ENCODE measurements at regions of chr12 and their contacts with region 1.

Region 1: DNA sequence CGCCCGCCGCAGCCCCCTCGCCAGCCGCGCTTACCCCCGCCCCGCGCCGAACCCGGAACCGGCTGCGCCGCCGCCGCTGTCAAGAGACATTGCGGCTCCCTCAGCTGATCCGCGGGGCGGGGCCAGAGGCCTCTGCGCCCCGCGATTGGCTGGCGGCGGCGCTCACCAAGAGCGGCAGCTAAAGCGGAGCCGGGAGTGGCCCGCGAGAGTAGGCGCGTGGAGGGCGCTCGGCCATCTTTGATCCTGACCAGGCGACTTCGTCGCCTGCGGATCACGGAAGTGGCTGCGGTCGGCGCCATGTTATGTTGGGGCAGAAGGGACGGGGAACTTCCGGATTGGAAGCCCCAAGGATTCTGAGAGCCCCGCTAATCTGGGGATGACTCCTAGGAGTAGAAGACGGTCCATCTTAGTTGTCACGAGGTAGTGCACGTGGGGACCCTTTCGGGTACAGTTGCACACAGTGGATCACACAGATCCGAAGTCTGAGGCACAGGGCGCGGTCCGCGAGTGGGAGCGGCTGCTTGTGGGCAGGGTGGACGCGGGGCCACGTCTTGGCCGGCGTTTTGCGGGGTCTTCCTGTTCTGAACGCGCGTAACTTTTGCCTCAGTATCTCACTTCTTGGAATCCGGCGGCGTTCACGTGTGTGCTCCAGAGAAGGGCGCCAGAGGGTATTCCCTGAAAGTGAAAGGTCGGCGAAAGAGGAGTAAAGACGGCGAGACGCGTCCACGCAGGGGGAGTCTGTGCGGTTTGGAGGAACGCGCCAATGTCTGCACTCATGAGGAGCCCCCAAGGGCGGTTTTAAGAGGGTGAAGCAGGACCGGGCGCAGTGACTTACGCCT is at the start of gene CHFR:
- DNase-seq: peak; percentile 88 to 97 (median 92)
- ATAC-seq: peak; percentile 96 to 97
- H3K4me3 Mint-ChIP-seq: peak within 1 kb of the TSS; percentile 97 to 99 (median 98)
- H3K27ac Mint-ChIP-seq: peak within 1 kb of the TSS; percentile 99 to 100 (median 100)
- H3K4me1 Mint-ChIP-seq: peaks cover 14 to 39% (median 29%) of the 10 kb centered on the region in 4 donors
- H3K27me3 Mint-ChIP-seq: no peaks in the 10 kb centered on the region
- polyA plus RNA-seq, gene CHFR: 25.1 to 37.4 (median 27.6) TPM

Region 2: GRCh38 chr12:132837693-132838409 is 49.9 kb before region 1 on chr12:
- POLR2A ChIA-PET with region 1: interaction called, 20 read pairs
- DNase-seq: no peak
- ATAC-seq: peak in 1 of 2 donors; percentile 3
- H3K4me3 Mint-ChIP-seq: peak overlapping the region; percentile 7 to 89 (median 85)
- H3K27ac Mint-ChIP-seq: peak overlapping the region in 9 of 10 donors; percentile 65 to 95 (median 94)
- H3K4me1 Mint-ChIP-seq: peaks cover 32 to 58% (median 43%) of the 10 kb centered on the region in 4 donors
- H3K27me3 Mint-ChIP-seq: no peaks in the 10 kb centered on the region

Region 3: DNA sequence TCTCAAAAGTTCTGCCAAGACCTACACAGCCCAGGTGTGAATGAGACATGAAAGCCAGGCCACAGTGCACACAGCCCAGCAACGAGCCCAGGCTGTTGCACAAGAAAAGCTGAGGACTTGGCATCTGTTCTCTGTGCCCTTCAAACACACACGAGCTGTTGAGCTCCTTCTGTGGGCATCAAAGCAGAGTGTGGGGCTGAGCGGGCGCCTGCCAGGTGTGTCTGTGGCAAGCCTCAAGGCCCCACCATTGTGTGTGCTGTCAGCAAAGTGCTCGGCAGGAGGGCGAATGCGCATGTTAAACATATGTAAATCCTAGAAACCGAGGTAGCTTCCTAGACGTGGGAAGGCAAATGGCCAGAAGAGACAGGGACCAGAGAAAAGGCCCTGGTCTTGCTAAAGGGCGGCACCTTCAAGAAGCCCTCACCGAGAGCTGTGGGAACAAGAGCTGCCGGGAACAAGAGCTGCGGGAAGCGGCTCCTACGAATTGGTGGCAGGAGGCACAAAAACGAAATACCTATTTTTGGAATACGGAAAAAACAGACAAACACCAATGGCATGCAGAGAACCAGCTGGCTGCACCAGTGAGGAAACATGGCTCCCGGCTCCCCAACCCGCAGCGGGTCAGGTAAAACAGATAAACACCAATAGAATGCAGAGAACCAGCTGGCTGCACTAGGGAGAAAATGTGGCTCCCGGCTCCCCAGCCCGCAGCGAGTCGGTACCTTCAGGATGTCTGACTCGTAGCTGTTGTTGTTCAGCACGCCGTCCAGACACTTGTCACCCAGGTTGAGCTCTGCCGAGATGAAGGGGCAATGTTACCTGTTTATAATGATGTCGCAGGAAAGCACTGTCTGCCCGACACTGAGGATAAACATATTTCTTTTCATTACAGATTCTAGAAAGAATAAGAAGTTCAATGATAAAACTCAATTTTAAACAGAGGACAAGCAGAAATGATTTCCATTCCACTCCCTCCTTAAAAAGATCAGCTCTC is 40.1 kb before region 1 on chr12:
- POLR2A ChIA-PET with region 1: interaction called, 17 read pairs
- DNase-seq: peak; percentile 16 to 82 (median 60)
- ATAC-seq: peak; percentile 96 to 99
- H3K4me3 Mint-ChIP-seq: peak overlapping the region; percentile 32 to 81 (median 70)
- H3K27ac Mint-ChIP-seq: peak overlapping the region; percentile 86 to 97 (median 94)
- H3K4me1 Mint-ChIP-seq: peaks cover 10 to 32% (median 21%) of the 10 kb centered on the region in 4 donors
- H3K27me3 Mint-ChIP-seq: no peaks in the 10 kb centered on the region

Region 4: DNA sequence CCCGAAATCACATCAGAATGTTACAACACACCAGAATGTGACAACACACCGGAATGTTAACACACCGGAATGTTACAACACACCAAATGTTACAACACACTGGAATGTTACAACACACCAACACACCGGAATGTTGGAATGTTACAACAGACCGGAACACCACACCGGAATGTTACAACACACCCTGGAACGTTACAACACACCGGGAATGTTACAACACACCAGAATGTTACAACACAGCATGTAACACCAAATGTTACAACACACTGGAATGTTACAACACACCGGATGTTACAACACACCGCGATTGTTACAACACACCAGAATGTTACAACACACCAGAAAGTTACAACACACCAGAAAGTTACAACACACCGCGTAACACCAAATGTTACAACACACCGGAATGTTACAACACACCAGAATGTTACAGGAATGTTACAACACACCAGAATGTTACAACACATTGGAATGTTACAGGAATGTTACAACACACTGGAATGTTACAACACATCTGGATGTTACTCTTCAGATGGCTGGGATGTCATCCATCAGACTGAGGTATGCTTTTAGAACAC is 21.4 kb before region 1 on chr12:
- POLR2A ChIA-PET with region 1: interaction called, 11 read pairs
- DNase-seq: no peak
- ATAC-seq: no peak
- H3K4me3 Mint-ChIP-seq: peak overlapping the region in 7 of 10 donors; percentile 20 to 77 (median 70)
- H3K27ac Mint-ChIP-seq: peak overlapping the region; percentile 65 to 98 (median 94)
- H3K4me1 Mint-ChIP-seq: peaks cover 12 to 39% (median 19%) of the 10 kb centered on the region in 4 donors
- H3K27me3 Mint-ChIP-seq: no peaks in the 10 kb centered on the region

Region 5: DNA sequence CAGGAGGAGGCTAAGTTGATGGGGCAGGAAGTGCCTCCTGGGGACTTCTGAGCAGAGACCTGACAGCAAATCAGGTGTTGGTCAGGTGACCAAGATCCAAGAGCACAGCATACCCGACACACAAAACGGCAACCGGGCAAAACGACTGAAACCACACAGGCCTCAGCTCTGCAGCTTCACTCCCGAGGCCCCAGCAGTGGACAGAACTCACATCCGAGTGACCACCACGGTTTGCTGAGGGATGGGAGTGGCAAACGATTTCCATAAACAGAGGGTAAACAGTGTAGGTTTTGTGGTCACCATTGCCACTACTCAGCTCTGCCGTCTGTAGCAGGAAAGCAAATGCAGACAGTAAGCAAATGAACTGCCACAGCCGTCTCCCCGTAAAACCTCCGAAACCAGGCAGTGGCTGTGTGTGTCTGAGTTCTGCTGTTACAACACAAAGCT is 14.7 kb before region 1 on chr12:
- POLR2A ChIA-PET with region 1: interaction called, 41 read pairs
- DNase-seq: peak in 8 of 10 donors; percentile 7 to 69 (median 40)
- ATAC-seq: peak; percentile 79 to 86
- H3K4me3 Mint-ChIP-seq: peak overlapping the region; percentile 64 to 83 (median 78)
- H3K27ac Mint-ChIP-seq: peak overlapping the region; percentile 34 to 96 (median 95)
- H3K4me1 Mint-ChIP-seq: peaks cover 9 to 43% (median 25%) of the 10 kb centered on the region in 4 donors
- H3K27me3 Mint-ChIP-seq: no peaks in the 10 kb centered on the region

Region 6: DNA sequence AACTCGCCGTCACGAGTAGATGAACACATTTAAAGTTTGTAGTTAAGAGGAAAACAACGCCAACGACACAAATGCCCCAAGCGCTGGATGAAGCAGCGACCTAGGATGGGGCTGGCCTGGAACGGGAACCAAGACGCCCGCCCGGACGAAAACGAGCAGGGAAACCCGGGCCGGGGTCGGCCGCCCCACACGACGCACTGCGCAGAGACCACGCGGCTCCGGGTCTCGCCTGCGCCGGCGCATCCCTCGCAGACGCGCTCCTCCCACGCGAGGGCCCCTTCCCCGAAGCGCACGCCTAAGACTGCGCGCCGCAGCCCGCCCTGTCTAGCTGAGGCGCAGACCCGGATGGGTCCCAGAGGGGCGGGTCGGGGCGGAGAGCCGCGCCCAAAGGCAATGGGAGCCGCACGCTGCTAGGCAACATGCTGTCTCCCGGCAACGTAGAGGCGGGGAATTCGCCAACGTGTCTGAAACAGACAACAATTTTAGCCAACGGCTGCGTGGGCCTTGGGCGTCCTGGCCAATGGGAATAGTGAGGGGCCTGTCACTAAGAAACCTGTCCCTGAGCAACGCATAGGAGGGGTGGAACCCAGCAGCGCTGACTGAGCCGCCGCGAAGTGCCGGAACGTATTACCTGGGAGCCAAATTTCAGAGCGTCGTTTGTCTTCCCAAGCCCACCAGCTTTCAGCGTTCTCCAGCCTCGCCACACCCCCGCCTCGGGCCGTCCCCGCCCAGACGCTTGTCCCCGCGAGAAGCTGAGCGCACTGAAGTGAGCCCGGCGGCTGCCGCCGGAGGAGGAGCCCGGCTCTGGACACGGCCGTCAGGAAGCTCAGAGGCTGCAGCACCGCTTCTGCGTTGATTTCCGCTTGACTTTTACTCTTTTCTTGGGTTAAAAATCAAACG is 20.7 kb after region 1 on chr12:
- POLR2A ChIA-PET with region 1: interaction called, 10 read pairs
- DNase-seq: peak; percentile 87 to 99 (median 96)
- ATAC-seq: peak; percentile 91 to 92
- H3K4me3 Mint-ChIP-seq: peak overlapping the region; percentile 82 to 99 (median 94)
- H3K27ac Mint-ChIP-seq: peak overlapping the region; percentile 93 to 100 (median 97)
- H3K4me1 Mint-ChIP-seq: peaks cover 13 to 29% (median 22%) of the 10 kb centered on the region in 4 donors
- H3K27me3 Mint-ChIP-seq: peaks cover 0 to 3% (median 0%) of the 10 kb centered on the region in 5 donors

Measured in naive thymus-derived CD8-positive, alpha-beta T cell (primary cell).